ENCODE measurements at regions of chr6 and their contacts with region 1.

Region 1: GRCh38 chr6:109009236-109009961 is 85.2 kb downstream of the SESN1 start:
- DNase-seq: peak; percentile 62 to 96
- H3K4me3 ChIP-seq: peak overlapping the region; percentile 69 to 99
- H3K27ac ChIP-seq: peak overlapping the region; percentile 77 to 94
- H3K4me1 ChIP-seq: peaks cover 0 to 11% of the 10 kb centered on the region in 2 donors
- H3K27me3 ChIP-seq: no peaks in the 10 kb centered on the region
- CTCF ChIP-seq: peak in 2 of 3 experiments; percentile 5 to 54

Region 2: DNA sequence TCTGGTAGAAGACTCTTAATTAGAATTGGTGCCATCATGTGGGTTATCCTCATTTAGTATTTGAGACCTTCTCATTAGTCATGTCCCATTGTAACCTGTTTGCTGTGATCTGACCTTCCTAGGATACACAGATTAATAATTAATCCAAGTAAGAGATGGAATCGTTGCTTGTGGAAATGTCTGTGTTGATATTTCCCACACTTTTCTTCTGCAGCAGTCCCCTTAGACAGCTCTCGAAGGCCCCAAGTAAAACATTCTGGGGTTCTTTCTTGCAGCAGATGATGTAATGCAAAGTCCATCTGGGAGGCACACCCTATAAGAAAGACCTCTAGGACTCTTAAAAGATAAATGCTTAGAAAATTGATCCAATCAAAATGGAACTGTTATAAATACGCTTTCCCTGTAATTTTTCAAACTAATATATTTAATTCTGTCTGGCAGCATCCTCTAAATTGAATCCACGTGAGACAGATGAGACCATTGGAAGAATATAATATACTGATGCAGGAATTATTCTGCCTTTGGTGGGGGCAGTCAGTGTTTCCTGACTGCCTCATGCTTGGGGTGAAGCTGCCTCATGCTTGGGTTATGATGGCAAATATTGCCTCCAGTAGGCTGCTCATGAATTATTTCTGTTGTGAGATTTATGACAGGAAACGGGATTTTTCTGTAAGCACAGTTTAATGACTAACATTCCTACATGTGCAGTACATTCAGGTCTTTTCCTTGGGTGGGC is 215.7 kb before region 1 on chr6:
- intact Hi-C with region 1: no loop called
- DNase-seq: no peak
- H3K4me3 ChIP-seq: no peak overlapping the region
- H3K27ac ChIP-seq: no peak overlapping the region
- H3K4me1 ChIP-seq: no peaks in the 10 kb centered on the region
- H3K27me3 ChIP-seq: no peaks in the 10 kb centered on the region
- CTCF ChIP-seq: no peak

Region 3: DNA sequence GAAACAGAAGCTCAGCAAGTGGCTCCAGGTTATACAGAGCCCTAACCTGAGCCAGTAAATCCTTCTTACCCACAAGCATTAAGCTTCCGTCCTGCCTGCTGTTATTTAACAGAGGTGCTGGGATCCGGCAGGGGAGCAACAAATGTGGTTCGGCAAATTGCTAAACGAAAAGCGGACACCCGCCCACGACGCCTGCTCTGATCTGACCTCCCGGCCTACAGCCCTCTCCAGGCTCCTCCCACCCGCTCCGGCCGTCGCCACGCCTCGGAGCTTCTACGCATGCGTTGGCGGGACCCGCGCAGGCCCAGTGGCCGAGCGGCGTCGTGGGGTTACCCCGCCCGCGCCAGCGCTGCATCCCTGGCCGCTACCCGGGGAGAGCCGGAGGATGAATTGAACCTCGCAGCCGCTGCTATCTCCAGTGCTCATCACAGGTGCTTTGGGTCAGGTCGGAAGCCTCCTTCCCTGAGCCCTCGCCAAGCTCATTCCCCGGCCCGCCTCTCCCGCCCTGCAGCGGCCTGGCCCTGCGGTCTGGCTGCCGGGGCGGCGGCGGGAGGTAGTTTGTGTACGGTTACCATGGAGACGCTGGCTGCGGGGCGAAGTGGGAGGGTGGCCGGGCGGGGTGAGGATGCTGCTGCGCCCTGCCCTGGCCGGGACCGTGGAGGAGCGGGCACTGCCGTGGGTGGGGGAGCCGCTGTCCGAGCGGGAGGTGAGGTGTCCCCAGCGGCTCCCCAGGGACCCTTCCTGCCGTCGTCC is 161.1 kb before region 1 on chr6 and contains the start of gene ARMC2:
- intact Hi-C with region 1: loop called (anchors 1 kb)
- DNase-seq: peak; percentile 63 to 94
- H3K4me3 ChIP-seq: peak within 1 kb of the TSS; percentile 53 to 79
- H3K27ac ChIP-seq: peak within 1 kb of the TSS; percentile 55 to 77
- H3K4me1 ChIP-seq: peaks cover 0 to 15% of the 10 kb centered on the region in 2 donors
- H3K27me3 ChIP-seq: no peaks in the 10 kb centered on the region
- CTCF ChIP-seq: no peak
- total RNA-seq, gene ARMC2: 0.11 TPM

Region 4: GRCh38 chr6:108947114-108947854 is 62.1 kb before region 1 on chr6:
- intact Hi-C with region 1: loop called (anchors 2 kb)
- DNase-seq: no peak
- H3K4me3 ChIP-seq: no peak overlapping the region
- H3K27ac ChIP-seq: peak overlapping the region; percentile 88 to 91
- H3K4me1 ChIP-seq: peaks cover 8 to 44% of the 10 kb centered on the region in 2 donors
- H3K27me3 ChIP-seq: no peaks in the 10 kb centered on the region
- CTCF ChIP-seq: no peak

Region 5: DNA sequence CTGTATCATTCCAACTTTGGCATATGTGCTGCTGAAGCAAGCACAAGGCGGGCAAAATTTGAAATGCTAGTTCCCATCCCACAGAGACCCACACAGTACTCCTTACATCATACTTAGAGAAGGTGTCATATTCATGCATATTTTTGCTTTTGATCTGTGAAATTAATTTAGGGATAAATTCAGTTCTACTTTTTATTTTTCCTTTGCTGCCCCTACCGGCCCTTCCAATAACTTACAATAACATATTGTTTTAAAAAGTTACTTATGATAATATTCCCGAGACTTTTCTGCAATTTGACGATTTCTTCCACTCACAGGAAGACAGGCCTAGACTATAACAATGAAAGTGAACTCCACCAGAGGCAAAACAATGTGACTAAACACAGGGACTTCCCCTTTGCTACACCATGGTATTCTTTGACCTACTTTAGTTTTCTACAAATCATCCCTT is 50.2 kb after region 1 on chr6:
- intact Hi-C with region 1: loop called (anchors 5 kb)
- DNase-seq: no peak
- H3K4me3 ChIP-seq: no peak overlapping the region
- H3K27ac ChIP-seq: no peak overlapping the region
- H3K4me1 ChIP-seq: peaks cover 2 to 26% of the 10 kb centered on the region in 2 donors
- H3K27me3 ChIP-seq: no peaks in the 10 kb centered on the region
- CTCF ChIP-seq: peak in 1 of 3 experiments; percentile 14

Region 6: GRCh38 chr6:109073344-109074132 is 64.1 kb after region 1 on chr6:
- intact Hi-C with region 1: loop called (anchors 2 kb)
- DNase-seq: no peak
- H3K4me3 ChIP-seq: no peak overlapping the region
- H3K27ac ChIP-seq: no peak overlapping the region
- H3K4me1 ChIP-seq: peaks cover 0 to 3% of the 10 kb centered on the region in 2 donors
- H3K27me3 ChIP-seq: no peaks in the 10 kb centered on the region
- CTCF ChIP-seq: peak; percentile 45 to 68 (median 63)

Region 7: GRCh38 chr6:109082188-109082577 is 72.8 kb after region 1 on chr6:
- intact Hi-C with region 1: loop called (anchors 2 kb)
- DNase-seq: no peak
- H3K4me3 ChIP-seq: no peak overlapping the region
- H3K27ac ChIP-seq: peak overlapping the region; percentile 47 to 82
- H3K4me1 ChIP-seq: peaks cover 12 to 33% of the 10 kb centered on the region in 2 donors
- H3K27me3 ChIP-seq: no peaks in the 10 kb centered on the region
- CTCF ChIP-seq: peak in 1 of 3 experiments; percentile 19